ENCODE measurements at regions of chr2 and their contacts with region 1.

Region 1: GRCh38 chr2:82527124-82527523 is 1932.0 kb downstream of the SUCLG1 start:
- DNase-seq: peak; percentile 57
- H3K4me3 Mint-ChIP-seq: no peak overlapping the region
- H3K27ac Mint-ChIP-seq: no peak overlapping the region
- H3K4me1 Mint-ChIP-seq: no peaks in the 10 kb centered on the region
- H3K27me3 Mint-ChIP-seq: no peaks in the 10 kb centered on the region

Region 2: DNA sequence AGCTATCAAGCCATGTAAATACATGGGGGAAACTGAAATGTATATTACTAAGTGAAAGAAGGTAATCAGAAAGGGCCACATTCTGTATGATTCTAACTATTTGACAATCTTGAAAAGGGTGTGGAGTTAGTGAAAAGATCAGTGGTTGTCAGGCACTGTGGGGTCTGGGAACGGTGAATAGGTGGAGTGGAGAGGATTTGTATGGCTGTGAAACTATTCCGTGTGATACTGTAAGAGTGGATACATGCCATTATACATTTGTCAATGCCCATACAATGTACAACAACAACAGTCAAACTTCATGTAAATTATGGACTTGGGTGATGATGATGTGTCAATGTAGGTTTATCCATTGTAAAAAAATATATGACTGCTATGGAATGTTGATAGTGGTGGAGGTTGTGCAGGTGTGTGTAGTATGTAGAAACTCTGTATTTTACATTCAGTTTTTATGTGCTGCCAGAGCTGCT is 815.8 kb after region 1 on chr2:
- intact Hi-C with region 1: loop called (anchors 5 kb)
- DNase-seq: peak; percentile 55
- H3K4me3 Mint-ChIP-seq: no peak overlapping the region
- H3K27ac Mint-ChIP-seq: no peak overlapping the region
- H3K4me1 Mint-ChIP-seq: no peaks in the 10 kb centered on the region
- H3K27me3 Mint-ChIP-seq: no peaks in the 10 kb centered on the region